Transverse colon (tissue), 4 donors: ENCODE measurements at regions of chr1 and their contacts with region 1.

Region 1: GRCh38 chr1:151819976-151820623 is 11.5 kb downstream of the RORC start:
- DNase-seq: no peak
- H3K4me3 ChIP-seq: no peak overlapping the region
- H3K27ac ChIP-seq: no peak overlapping the region
- H3K4me1 ChIP-seq: no peaks in the 10 kb centered on the region
- H3K27me3 ChIP-seq: no peaks in the 10 kb centered on the region
- CTCF ChIP-seq: no peak
- EP300 ChIP-seq: no peak
- POLR2A ChIP-seq: no peak

Region 2: DNA sequence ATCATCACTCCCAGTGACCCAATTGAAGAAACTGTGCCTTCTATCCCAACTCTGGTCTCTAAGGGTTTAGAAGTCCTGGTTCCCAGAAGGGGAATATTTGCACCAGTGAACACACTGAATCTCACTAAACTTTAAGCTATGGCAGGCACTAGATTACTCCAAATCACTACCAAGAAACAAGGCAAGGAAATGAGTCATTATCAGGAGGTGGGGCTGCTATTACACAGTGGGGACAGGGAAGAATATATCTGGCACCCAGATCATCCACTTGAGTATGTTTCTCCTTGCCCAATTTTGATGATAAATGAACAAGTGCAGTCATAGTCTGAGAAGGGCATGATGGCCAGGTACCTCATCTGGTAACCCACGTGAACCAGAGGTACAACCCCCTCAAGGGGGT is 63.8 kb before region 1 on chr1:
- in situ Hi-C with region 1: loop called in 1 of 4 experiments (anchors 10 kb)
- intact Hi-C with region 1: no loop called
- DNase-seq: no peak
- H3K4me3 ChIP-seq: no peak overlapping the region
- H3K27ac ChIP-seq: no peak overlapping the region
- H3K4me1 ChIP-seq: no peaks in the 10 kb centered on the region
- H3K27me3 ChIP-seq: no peaks in the 10 kb centered on the region
- CTCF ChIP-seq: no peak
- EP300 ChIP-seq: no peak
- POLR2A ChIP-seq: no peak